AG04449 (cell line): ENCODE measurements at regions of chr20 and their contacts with region 1.

Region 1: GRCh38 chr20:49541733-49542513 is 26.0 kb downstream of the PTGIS start:
- DNase-seq: no peak
- H3K4me3 ChIP-seq: no peak overlapping the region
- CTCF ChIP-seq: peak; percentile 69

Region 2: DNA sequence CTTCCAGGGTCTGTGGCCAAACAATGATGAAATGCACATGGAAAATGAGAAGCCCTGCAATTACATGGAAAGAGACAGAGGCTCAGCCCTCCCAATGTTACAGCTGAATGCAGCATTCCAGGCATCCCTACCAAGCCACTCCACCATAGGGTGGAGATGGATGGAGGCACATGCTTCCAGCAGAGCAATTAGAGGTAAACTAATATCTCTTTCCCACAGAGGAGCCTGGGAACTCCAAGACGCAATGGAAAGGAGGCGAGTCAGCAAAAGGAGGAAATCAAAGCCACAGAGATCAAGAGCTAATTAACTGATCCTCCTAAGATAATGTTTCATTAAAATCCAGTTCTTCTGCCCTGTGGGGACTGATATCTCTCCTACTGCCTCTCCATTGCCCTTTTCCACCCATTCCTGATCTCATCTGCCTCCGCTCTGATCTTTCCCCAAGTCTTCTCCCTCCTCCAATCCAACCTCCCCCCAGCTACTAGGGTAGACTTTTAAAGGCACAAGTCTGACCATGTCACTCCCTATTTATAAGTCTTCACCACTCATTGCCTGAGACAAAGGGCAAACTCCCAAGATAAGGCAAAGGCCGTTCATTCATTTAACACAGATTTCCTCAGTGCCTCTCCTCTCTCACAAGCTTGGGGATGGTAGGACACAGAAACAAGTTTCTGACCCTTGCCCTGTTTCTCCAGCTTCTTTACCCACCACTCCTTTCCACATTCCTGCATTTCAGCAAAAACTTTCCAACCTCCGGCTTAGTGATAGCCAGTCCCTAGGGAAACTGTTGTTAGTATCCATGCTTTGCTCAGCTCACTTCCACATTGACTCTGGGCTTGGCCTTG is 45.1 kb before region 1 on chr20:
- CTCF ChIA-PET with region 1: no interaction called
- POLR2A ChIA-PET with region 1: no interaction called
- DNase-seq: no peak
- H3K4me3 ChIP-seq: no peak overlapping the region
- CTCF ChIP-seq: no peak

Region 3: GRCh38 chr20:49526056-49526455 is 15.9 kb before region 1 on chr20:
- CTCF ChIA-PET with region 1: interaction called, 11 read pairs
- POLR2A ChIA-PET with region 1: no interaction called
- DNase-seq: no peak
- H3K4me3 ChIP-seq: no peak overlapping the region
- CTCF ChIP-seq: no peak

Region 4: GRCh38 chr20:49567421-49568334 is 25.8 kb after region 1 on chr20 and contains the start of gene PTGIS:
- CTCF ChIA-PET with region 1: interaction called, 14 read pairs
- POLR2A ChIA-PET with region 1: no interaction called
- DNase-seq: no peak
- H3K4me3 ChIP-seq: peak within 1 kb of the TSS; percentile 62
- CTCF ChIP-seq: no peak

Region 5: DNA sequence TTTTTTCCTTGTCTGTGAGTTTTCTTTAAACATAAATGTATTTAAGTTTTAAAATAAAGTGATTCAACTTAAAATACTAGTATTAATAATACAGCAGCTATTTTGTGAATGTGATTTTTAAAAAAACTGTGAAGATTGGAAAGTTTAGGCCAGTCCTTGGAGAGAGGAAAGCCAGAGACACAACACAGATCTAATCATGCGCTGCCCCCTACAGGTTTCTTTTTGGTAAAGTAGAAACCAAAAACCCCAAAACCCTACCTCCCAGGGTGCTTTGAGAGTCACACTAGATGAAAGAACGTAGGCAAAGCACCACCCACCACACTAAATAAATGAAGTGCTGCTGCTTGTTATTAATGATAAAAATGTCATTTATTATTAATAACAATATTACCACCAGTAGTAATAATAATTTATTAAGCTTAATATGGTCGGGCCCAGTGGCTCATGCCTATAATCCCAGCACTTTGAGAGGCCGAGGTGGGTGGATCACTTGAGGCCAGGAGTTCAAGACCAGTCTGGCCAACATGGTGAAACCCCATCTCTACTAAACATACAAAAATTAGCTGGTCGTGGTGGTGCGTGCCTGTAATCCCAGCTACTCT is 304.4 kb after region 1 on chr20:
- CTCF ChIA-PET with region 1: interaction called, 50 read pairs
- POLR2A ChIA-PET with region 1: no interaction called
- DNase-seq: no peak
- H3K4me3 ChIP-seq: no peak overlapping the region
- CTCF ChIP-seq: peak; percentile 30

Region 6: GRCh38 chr20:49888345-49888966 is 346.5 kb after region 1 on chr20:
- CTCF ChIA-PET with region 1: interaction called, 15 read pairs
- POLR2A ChIA-PET with region 1: no interaction called
- DNase-seq: no peak
- H3K4me3 ChIP-seq: no peak overlapping the region
- CTCF ChIP-seq: peak; percentile 80